Caco-2 (cell line): ENCODE measurements at regions of chrX and their contacts with region 1.

Region 1: GRCh38 chrX:27555514-27555913 is 34.6 kb upstream of the DCAF8L2 start:
- DNase-seq: peak; percentile 35 to 41
- H3K4me3 ChIP-seq: no peak overlapping the region
- H3K4me3 Mint-ChIP-seq: no peak overlapping the region
- H3K27ac Mint-ChIP-seq: no peak overlapping the region
- H3K4me1 ChIP-seq: no peaks in the 10 kb centered on the region
- H3K4me1 Mint-ChIP-seq: no peaks in the 10 kb centered on the region
- H3K27me3 ChIP-seq: no peaks in the 10 kb centered on the region
- H3K27me3 Mint-ChIP-seq: no peaks in the 10 kb centered on the region
- CTCF ChIP-seq: peak; percentile 42 to 56

Region 2: DNA sequence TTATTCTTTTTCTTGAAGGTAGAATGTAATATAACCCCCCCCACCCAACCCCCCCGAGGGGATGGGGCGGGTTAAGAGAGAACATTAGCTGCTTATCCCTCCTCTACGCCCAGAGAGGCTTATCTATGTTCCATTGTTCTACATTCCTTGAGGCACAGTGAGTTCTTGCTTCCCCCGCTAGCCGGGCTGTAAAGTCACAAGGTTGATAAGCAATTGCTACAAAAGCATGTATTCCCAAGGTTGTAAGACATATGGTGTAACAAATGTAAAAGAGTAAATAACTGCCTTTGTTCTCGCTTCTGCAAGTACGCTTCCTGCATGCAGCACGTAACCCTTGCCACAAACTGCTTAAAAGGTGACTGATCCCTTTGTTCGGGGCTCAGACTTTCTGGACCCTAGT is 42.8 kb after region 1 on chrX:
- CTCF ChIA-PET with region 1: no interaction called
- POLR2A ChIA-PET with region 1: no interaction called
- intact Hi-C with region 1: loop called (anchors 1 kb)
- DNase-seq: peak; percentile 67 to 80
- H3K4me3 ChIP-seq: no peak overlapping the region
- H3K4me3 Mint-ChIP-seq: peak overlapping the region; percentile 33
- H3K27ac Mint-ChIP-seq: no peak overlapping the region
- H3K4me1 ChIP-seq: peaks cover 13% of the 10 kb centered on the region; the same call in 1 of the 2 replicates
- H3K4me1 Mint-ChIP-seq: peaks cover 6% of the 10 kb centered on the region
- H3K27me3 ChIP-seq: no peaks in the 10 kb centered on the region
- H3K27me3 Mint-ChIP-seq: no peaks in the 10 kb centered on the region
- CTCF ChIP-seq: no peak

Region 3: DNA sequence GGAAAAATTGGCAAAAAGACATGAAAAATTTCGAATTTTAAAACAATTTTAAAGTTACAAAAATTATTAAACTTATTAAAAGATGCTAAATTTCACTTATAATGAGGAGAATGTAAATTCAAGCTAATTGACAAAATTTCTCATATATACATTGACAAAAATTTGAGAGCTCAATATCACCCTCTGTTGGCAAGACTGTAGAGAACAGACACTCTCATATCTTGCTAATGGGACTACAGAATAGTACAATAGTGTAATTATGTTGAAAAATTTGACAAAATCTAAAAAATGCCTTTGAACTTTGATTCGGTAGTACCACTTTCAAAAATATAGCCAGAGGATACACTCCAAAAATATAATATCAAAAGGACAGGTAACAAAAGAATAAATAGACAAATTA is 64.5 kb after region 1 on chrX:
- CTCF ChIA-PET with region 1: interaction called, 18 read pairs
- POLR2A ChIA-PET with region 1: no interaction called
- intact Hi-C with region 1: loop called (anchors 1 kb)
- DNase-seq: peak in 1 of 2 experiments; percentile 5
- H3K4me3 ChIP-seq: no peak overlapping the region
- H3K4me3 Mint-ChIP-seq: no peak overlapping the region
- H3K27ac Mint-ChIP-seq: no peak overlapping the region
- H3K4me1 ChIP-seq: peaks cover 6% of the 10 kb centered on the region; the same call in 1 of the 2 replicates
- H3K4me1 Mint-ChIP-seq: peaks cover 7% of the 10 kb centered on the region
- H3K27me3 ChIP-seq: no peaks in the 10 kb centered on the region
- H3K27me3 Mint-ChIP-seq: no peaks in the 10 kb centered on the region
- CTCF ChIP-seq: peak; percentile 42 to 49

Region 4: DNA sequence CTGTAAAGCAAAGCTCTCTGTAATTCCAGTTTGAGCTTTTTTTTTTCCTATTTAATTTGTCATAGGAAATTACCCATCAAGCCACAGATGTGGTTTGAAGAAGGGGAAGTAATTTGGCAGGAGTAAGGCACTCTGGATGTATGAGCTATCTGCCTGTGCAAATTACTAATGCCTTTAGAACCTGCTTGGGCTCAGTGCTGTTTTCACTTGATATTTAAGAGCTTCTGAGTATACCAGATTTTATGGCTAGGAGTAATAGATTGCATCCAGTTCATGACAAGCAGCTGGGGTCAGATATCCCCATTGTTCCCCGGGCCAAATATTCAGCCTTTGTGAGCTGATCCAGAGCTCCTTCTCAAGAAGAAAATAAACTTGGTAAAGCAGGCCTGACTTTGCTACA is 123.8 kb after region 1 on chrX:
- CTCF ChIA-PET with region 1: no interaction called
- POLR2A ChIA-PET with region 1: no interaction called
- intact Hi-C with region 1: loop called (anchors 1 kb)
- DNase-seq: no peak
- H3K4me3 ChIP-seq: no peak overlapping the region
- H3K4me3 Mint-ChIP-seq: no peak overlapping the region
- H3K27ac Mint-ChIP-seq: no peak overlapping the region
- H3K4me1 ChIP-seq: no peaks in the 10 kb centered on the region
- H3K4me1 Mint-ChIP-seq: no peaks in the 10 kb centered on the region
- H3K27me3 ChIP-seq: no peaks in the 10 kb centered on the region
- H3K27me3 Mint-ChIP-seq: no peaks in the 10 kb centered on the region
- CTCF ChIP-seq: no peak